ENCODE measurements at regions of chr2 and their contacts with region 1.

Region 1: DNA sequence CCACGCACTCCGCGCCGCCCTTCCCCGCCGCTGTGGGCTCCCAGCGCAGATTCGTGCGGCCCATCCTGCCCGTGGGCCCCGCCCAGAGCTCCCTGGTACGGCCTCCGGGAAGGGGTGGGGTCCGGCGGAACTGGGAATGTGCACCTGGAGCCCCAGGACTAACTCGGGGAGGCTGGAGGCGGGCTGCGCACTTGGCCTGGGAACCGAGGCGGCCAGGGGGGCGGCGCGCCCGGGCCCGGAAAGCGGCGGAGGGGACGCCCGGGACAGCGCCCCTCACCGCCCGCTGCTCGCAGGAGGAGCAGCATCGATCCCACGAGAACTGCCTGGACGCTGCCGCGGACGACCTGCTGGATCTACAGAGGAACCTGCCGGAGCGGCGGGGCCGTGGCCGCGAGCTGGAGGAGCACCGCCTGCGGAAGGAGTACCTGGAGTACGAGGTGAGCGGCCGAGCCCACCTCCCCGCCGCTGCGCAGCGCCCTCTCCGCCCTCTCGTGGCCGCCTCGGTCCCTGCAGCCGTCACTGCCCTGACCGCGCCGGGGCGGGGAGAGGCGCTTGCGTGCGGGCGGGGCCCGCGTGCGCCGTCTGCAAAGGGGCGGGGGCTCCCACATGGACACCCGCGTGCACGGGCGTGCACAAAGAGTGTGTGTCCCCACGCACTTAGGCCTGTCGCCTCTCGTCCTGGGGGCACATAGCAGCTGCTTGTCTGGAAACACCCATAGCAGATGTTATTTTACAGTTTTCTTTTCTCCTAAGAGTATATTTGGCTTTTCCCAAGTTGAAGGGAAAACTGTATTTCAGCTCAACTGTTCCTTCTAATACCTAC is 25.2 kb downstream of the PSD4 start:
- DNase-seq: peak; percentile 88
- ATAC-seq: peak; percentile 70
- H3K4me3 Mint-ChIP-seq: no peak overlapping the region
- H3K27ac Mint-ChIP-seq: no peak overlapping the region
- H3K4me1 Mint-ChIP-seq: peaks cover 8% of the 10 kb centered on the region
- H3K27me3 Mint-ChIP-seq: no peaks in the 10 kb centered on the region

Region 2: GRCh38 chr2:112834396-112835037 is 364.5 kb before region 1 on chr2:
- CTCF ChIA-PET with region 1: no interaction called
- POLR2A ChIA-PET with region 1: no interaction called
- intact Hi-C with region 1: no loop called
- DNase-seq: no peak
- ATAC-seq: no peak
- H3K4me3 Mint-ChIP-seq: no peak overlapping the region
- H3K27ac Mint-ChIP-seq: no peak overlapping the region
- H3K4me1 Mint-ChIP-seq: no peaks in the 10 kb centered on the region
- H3K27me3 Mint-ChIP-seq: peaks cover 6% of the 10 kb centered on the region

Region 3: DNA sequence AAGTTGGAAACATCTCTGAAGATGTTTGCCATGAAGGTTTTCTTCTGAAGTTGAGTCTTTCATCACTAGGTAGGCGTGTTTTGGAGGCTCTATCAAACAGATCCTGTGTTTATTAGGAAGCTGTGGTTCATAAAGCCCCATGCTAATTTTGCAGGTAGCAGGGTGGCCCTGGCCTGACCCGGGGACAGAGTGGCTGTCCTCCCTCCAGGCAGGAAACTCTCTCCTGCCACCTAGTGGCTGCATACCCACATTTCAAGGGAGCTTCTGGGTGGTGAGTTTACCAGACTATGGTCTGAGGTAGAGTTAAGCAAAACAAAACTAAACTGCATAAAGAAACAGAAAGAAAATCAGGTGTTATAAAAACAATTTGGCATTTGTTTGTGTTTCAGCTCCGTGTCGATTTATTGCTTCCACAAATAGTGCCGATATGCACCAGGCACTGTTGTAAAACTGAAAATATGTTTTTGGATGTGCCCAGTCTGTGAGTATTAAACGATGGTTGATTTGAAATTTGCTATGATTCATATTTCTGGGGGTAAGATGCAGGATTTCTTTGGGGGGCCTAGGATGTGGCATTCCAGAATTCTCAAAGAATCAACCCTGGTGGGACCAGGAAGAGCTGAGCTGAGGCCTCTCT is 314.0 kb before region 1 on chr2:
- CTCF ChIA-PET with region 1: no interaction called
- POLR2A ChIA-PET with region 1: no interaction called
- intact Hi-C with region 1: no loop called
- DNase-seq: peak; percentile 85
- ATAC-seq: peak; percentile 87
- H3K4me3 Mint-ChIP-seq: no peak overlapping the region
- H3K27ac Mint-ChIP-seq: peak overlapping the region; percentile 1
- H3K4me1 Mint-ChIP-seq: peaks cover 23% of the 10 kb centered on the region
- H3K27me3 Mint-ChIP-seq: no peaks in the 10 kb centered on the region

Region 4: GRCh38 chr2:113181258-113182051 is 17.5 kb before region 1 on chr2:
- CTCF ChIA-PET with region 1: interaction called, 21 read pairs
- POLR2A ChIA-PET with region 1: no interaction called
- intact Hi-C with region 1: no loop called
- DNase-seq: no peak
- ATAC-seq: no peak
- H3K4me3 Mint-ChIP-seq: peak overlapping the region; percentile 32
- H3K27ac Mint-ChIP-seq: peak overlapping the region; percentile 85
- H3K4me1 Mint-ChIP-seq: peaks cover 91% of the 10 kb centered on the region
- H3K27me3 Mint-ChIP-seq: no peaks in the 10 kb centered on the region

Region 5: GRCh38 chr2:113211226-113212105 is 12.5 kb after region 1 on chr2:
- CTCF ChIA-PET with region 1: interaction called, 14 read pairs
- POLR2A ChIA-PET with region 1: interaction called, 6 read pairs
- intact Hi-C with region 1: no loop called
- DNase-seq: no peak
- ATAC-seq: no peak
- H3K4me3 Mint-ChIP-seq: no peak overlapping the region
- H3K27ac Mint-ChIP-seq: no peak overlapping the region
- H3K4me1 Mint-ChIP-seq: no peaks in the 10 kb centered on the region
- H3K27me3 Mint-ChIP-seq: no peaks in the 10 kb centered on the region